ENCODE measurements at regions of chr2 and their contacts with region 1.

Region 1: DNA sequence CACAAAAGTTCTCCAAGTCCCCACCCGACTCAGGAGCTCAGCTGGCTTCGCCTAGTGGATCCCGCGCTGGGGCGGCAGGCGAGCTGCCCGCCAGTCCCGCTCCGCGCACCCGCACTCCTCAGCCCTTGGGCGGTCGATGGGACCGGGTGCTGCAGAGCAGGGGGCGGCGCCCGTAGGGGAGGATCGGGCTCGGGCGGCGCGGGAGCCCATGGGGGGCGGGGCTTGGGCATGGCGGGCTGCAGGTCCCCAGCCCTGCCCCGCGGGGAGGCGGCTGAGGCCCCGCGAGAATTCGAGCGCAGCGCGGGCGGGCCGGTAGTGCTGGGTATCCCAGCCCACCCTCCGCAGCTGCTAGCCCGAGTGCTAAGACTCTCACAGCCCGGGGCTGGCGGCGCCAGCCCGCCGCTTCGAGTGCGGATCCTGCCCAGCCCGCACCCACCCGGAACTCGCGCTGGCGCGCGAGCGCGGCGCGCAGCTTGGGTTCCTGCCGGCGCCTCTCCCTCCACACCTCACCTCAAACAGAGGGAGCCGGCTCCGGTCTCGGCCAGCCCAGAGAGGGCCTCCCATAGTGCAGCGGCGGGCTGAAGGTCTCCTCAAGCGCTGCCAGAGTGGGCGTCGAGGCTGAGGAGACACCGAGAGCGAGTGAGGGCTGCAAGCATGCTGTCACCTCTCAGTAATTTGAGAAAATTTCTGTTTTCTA is 75.5 kb upstream of the ATP5MC3 start:
- DNase-seq: no peak
- H3K4me3 Mint-ChIP-seq: no peak overlapping the region
- H3K27ac Mint-ChIP-seq: no peak overlapping the region
- H3K4me1 Mint-ChIP-seq: no peaks in the 10 kb centered on the region
- H3K27me3 Mint-ChIP-seq: peaks cover 23% of the 10 kb centered on the region

Region 2: DNA sequence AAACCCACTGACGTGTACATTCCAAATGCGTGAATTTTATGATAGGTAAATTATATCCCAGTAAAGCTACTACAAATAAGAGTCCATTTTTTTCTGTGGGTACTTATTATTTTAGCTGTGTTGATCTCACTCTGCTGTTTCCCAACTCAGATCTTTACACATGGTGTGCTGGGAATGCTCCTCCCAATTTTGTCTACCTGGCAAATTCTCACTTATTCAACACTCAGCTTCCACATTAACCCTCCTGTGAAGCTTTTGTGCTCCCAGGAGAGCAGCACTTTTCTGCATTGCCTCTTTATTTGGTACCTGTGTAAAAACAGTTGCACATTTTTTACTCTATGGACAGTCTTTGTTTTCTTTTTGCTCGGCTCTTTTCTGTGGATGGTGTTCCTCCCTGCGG is 37.0 kb before region 1 on chr2:
- CTCF ChIA-PET with region 1: no interaction called
- POLR2A ChIA-PET with region 1: no interaction called
- intact Hi-C with region 1: loop called (anchors 5 kb)
- DNase-seq: no peak
- H3K4me3 Mint-ChIP-seq: no peak overlapping the region
- H3K27ac Mint-ChIP-seq: no peak overlapping the region
- H3K4me1 Mint-ChIP-seq: no peaks in the 10 kb centered on the region
- H3K27me3 Mint-ChIP-seq: peaks cover 19% of the 10 kb centered on the region